Natural killer cell (primary cell): ENCODE measurements at regions of chr2 and their contacts with region 1.

Region 1: GRCh38 chr2:101252408-101253012 is at the start of gene CNOT11:
- DNase-seq: peak; percentile 96 to 100
- ATAC-seq: peak; percentile 79 to 93 (median 85)
- H3K4me3 ChIP-seq: peak within 1 kb of the TSS; percentile 84
- H3K4me3 Mint-ChIP-seq: peak within 1 kb of the TSS; percentile 98
- H3K27ac ChIP-seq: peak within 1 kb of the TSS; percentile 96
- H3K27ac Mint-ChIP-seq: peak within 1 kb of the TSS; percentile 93 to 94
- H3K4me1 ChIP-seq: peaks cover 35% of the 10 kb centered on the region
- H3K4me1 Mint-ChIP-seq: peaks cover 41 to 44% of the 10 kb centered on the region in 2 donors
- H3K27me3 ChIP-seq: no peaks in the 10 kb centered on the region
- H3K27me3 Mint-ChIP-seq: no peaks in the 10 kb centered on the region
- CTCF ChIP-seq: no peak
- total RNA-seq, gene CNOT11: 41.7 to 49.8 (median 46.0) TPM

Region 2: GRCh38 chr2:101308432-101309210 is 56.1 kb after region 1 on chr2 and contains the start of gene RNF149:
- intact Hi-C with region 1: loop called (anchors 1 kb)
- DNase-seq: peak; percentile 94 to 95
- ATAC-seq: peak; percentile 72 to 88 (median 83)
- H3K4me3 ChIP-seq: peak within 1 kb of the TSS; percentile 73
- H3K4me3 Mint-ChIP-seq: peak within 1 kb of the TSS; percentile 99
- H3K27ac ChIP-seq: peak within 1 kb of the TSS; percentile 87
- H3K27ac Mint-ChIP-seq: peak within 1 kb of the TSS; percentile 96 to 98
- H3K4me1 ChIP-seq: peaks cover 56% of the 10 kb centered on the region
- H3K4me1 Mint-ChIP-seq: peaks cover 77 to 80% of the 10 kb centered on the region in 2 donors
- H3K27me3 ChIP-seq: no peaks in the 10 kb centered on the region
- H3K27me3 Mint-ChIP-seq: no peaks in the 10 kb centered on the region
- CTCF ChIP-seq: no peak
- total RNA-seq, gene RNF149: 133 to 151 (median 149) TPM